ENCODE measurements at regions of chr12 and their contacts with region 1.

Region 1: DNA sequence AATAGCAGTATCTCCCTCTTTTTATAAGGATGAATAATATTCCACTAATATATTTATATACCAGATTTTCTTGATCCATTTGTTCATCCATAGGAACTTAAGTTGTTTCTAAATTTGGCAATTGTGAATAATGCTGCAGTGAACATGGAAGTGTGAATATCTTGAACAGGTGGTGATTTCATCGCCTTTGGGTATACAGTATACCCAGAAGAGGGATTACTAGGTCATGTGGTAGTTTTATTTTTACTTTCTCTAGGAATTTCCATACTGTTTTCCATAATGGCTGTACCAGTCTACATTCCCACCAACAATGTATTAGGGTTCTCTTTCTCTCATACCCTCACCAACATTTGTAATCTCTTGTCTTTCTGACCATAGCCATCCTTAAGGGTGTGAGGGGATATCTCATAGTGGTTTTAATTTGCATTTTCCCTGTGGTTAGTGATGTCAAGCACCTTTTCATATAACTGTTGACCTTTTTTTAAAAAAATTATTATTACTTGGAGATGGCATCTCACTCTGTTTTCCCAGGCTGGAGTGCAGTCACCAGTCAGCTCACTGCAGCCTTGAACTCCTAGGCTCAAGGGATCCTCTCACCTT is 20.5 kb downstream of the PPHLN1 start:
- DNase-seq: no peak
- CTCF ChIP-seq: no peak

Region 2: DNA sequence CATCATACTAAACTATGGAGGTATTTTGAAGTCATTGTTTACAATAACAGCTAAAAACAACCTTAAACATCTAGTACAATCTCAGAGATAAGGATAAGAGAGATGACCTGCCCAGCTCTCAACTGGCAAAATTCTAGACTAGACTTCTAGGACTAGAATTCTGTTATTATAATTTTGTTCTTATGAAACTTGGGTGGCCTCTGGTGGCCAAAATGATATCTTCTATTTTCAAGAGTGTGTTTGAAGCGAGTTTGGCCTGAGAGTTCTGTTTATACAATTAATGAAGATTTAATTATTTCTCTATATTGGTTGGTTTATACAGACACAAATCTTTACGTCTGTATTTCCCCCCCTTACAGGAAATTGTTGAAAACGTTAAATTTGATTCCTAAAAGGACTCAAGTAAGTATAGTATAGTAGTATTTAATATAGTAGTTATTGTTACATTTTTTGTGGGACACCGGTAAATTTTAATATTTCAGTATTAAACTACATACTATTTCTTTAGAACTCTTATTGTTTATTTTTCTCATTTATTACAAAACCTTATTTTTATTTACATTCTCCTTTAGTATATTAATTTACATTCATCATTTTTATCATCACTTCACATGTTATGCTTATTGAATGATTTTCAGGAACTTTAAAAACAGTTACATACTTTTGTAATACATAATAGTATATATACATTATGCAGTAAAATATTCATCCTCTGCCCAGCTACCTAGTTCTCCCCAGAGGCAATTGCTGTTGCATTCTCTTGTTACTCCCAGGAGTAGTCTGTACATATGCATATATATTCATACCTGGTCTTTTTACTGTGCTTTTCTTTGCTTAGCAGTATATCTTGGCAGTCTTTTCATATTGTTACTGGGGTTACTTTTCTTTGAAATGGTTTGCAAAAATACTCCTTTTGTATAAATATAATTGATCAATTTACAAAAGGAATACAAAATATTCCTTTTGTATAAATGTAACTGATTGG is 13.9 kb before region 1 on chr12:
- CTCF ChIA-PET with region 1: interaction called, 11 read pairs
- POLR2A ChIA-PET with region 1: no interaction called
- DNase-seq: peak; percentile 61
- CTCF ChIP-seq: peak; percentile 61

Region 3: DNA sequence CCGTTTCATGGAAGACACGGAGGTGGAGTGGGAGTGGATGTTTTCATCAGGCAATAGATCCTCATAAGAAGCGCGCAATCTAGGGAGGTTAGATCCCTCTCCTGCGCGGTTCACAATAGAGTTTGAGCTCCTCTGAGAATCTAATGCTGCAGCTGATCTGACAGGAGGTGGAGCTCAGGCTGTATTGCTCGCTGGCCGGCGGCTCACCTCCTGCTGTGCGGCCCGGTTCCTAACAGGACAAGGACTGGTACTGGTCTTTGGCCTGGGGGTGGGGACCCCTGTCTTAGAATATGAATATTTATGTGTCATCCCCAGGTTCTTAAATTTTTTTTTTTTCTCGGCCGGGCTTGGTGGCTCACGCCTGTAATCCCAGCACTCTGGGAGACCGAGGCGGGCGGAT is 206.3 kb after region 1 on chr12:
- CTCF ChIA-PET with region 1: no interaction called
- POLR2A ChIA-PET with region 1: no interaction called
- DNase-seq: no peak
- CTCF ChIP-seq: no peak

Measured in GM10248 (cell line).